ENCODE measurements at regions of chr17 and their contacts with region 1.

Region 1: DNA sequence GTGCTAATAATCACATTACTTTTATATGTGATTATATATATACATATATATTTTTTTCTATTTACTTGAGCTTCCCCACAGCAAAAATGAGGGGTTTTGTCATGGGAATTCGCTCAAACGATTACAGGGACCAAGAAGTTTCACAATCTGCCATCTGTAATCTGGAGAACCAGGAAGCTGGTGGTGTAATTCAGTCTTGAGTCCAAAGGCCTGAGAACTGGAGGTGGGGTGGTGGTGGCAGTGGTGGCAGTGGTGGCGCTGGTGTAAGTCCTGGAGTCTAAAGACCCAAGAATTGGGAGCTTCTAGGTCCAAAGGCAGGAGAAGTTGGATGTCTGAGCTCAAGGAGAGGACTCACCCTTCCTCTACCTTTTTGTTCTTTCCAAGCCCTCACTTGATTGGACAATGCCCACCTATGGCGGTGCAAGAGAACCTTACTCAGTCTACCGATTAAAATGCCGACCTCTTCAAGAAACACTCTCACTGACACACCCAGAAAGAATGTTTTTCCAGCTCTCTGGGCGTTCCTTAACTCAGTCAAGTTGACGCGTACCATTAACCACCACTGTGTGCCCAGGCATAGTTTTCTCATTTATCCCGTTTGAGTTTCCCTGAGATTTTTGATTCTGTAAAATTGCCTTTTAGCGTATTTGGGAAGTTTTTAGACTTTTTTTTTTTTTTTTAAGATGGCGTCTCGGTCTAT is 31.9 kb downstream of the POLR2A start:
- DNase-seq: no peak
- ATAC-seq: no peak
- H3K4me3 ChIP-seq: no peak overlapping the region
- H3K4me3 Mint-ChIP-seq: no peak overlapping the region
- H3K27ac ChIP-seq: no peak overlapping the region
- H3K27ac Mint-ChIP-seq: no peak overlapping the region
- H3K4me1 ChIP-seq: no peaks in the 10 kb centered on the region
- H3K4me1 Mint-ChIP-seq: peaks cover 2% of the 10 kb centered on the region
- H3K27me3 ChIP-seq: no peaks in the 10 kb centered on the region
- H3K27me3 Mint-ChIP-seq: no peaks in the 10 kb centered on the region
- CTCF ChIP-seq: no peak

Region 2: GRCh38 chr17:7454980-7455379 is 61.1 kb before region 1 on chr17:
- CTCF ChIA-PET with region 1: interaction called, 10 read pairs
- POLR2A ChIA-PET with region 1: no interaction called
- intact Hi-C with region 1: no loop called
- DNase-seq: no peak
- ATAC-seq: peak; percentile 35
- H3K4me3 ChIP-seq: peak overlapping the region; percentile 82 to 83
- H3K4me3 Mint-ChIP-seq: peak overlapping the region; percentile 98
- H3K27ac ChIP-seq: peak overlapping the region; percentile 60 to 74
- H3K27ac Mint-ChIP-seq: peak overlapping the region; percentile 91
- H3K4me1 ChIP-seq: peaks cover 15% of the 10 kb centered on the region
- H3K4me1 Mint-ChIP-seq: peaks cover 24% of the 10 kb centered on the region
- H3K27me3 ChIP-seq: no peaks in the 10 kb centered on the region
- H3K27me3 Mint-ChIP-seq: no peaks in the 10 kb centered on the region
- CTCF ChIP-seq: no peak

Region 3: GRCh38 chr17:7502987-7503386 is 13.1 kb before region 1 on chr17:
- CTCF ChIA-PET with region 1: interaction called, 11 read pairs
- POLR2A ChIA-PET with region 1: interaction called, 4 read pairs
- intact Hi-C with region 1: no loop called
- DNase-seq: peak in 2 of 9 experiments; percentile 34 to 47
- ATAC-seq: peak; percentile 41
- H3K4me3 ChIP-seq: no peak overlapping the region
- H3K4me3 Mint-ChIP-seq: no peak overlapping the region
- H3K27ac ChIP-seq: no peak overlapping the region
- H3K27ac Mint-ChIP-seq: no peak overlapping the region
- H3K4me1 ChIP-seq: no peaks in the 10 kb centered on the region
- H3K4me1 Mint-ChIP-seq: no peaks in the 10 kb centered on the region
- H3K27me3 ChIP-seq: no peaks in the 10 kb centered on the region
- H3K27me3 Mint-ChIP-seq: no peaks in the 10 kb centered on the region
- CTCF ChIP-seq: no peak

Region 4: DNA sequence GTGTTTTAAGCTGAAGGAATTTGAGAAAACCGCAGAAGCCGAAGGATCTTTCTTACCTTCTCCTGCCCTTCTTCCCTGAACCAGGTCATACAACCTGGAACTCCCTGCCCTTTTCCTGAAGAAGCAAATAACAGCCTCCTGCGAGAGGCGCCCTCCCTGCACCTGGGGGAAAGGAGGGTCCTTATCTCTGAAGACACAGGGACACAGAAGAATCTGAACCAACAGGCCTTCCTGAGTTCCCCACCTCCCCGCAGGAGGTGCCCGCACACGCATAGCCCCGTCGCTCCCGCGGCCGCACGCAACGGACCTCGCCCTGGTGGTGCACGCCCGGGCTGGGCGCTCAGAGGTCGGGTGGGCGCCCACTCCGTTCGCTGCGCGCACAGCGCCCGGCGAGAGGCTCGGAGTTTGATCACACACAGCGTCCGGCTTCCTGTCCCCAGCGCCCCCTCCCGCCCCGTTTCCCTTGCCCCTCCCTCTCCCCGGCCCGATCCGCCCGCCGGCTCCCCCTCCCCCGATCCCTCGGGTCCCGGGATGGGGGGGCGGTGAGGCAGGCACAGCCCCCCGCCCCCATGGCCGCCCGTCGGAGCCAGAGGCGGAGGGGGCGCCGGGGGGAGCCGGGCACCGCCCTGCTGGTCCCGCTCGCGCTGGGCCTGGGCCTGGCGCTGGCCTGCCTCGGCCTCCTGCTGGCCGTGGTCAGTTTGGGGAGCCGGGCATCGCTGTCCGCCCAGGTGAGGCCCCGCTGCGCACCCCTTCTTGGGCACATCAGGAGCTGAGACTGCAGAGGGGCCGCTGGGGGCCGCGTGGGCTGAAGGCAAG is 32.7 kb after region 1 on chr17 and contains the start of gene TNFSF12:
- CTCF ChIA-PET with region 1: interaction called, 343 read pairs
- POLR2A ChIA-PET with region 1: no interaction called
- intact Hi-C with region 1: loop called in 1 of 2 experiments (anchors 5 kb)
- DNase-seq: peak in 8 of 9 experiments; percentile 45 to 80 (median 64)
- ATAC-seq: peak; percentile 49
- H3K4me3 ChIP-seq: peak within 1 kb of the TSS; percentile 64 to 92
- H3K4me3 Mint-ChIP-seq: peak within 1 kb of the TSS; percentile 84
- H3K27ac ChIP-seq: peak within 1 kb of the TSS; percentile 78 to 83
- H3K27ac Mint-ChIP-seq: peak within 1 kb of the TSS; percentile 90
- H3K4me1 ChIP-seq: peaks cover 56% of the 10 kb centered on the region
- H3K4me1 Mint-ChIP-seq: peaks cover 45% of the 10 kb centered on the region
- H3K27me3 ChIP-seq: no peaks in the 10 kb centered on the region
- H3K27me3 Mint-ChIP-seq: no peaks in the 10 kb centered on the region
- CTCF ChIP-seq: no peak
- total RNA-seq, gene TNFSF12: 11.3 to 13.1 TPM

Region 5: GRCh38 chr17:7589204-7589868 is 73.3 kb after region 1 on chr17:
- CTCF ChIA-PET with region 1: interaction called, 31 read pairs
- POLR2A ChIA-PET with region 1: interaction called, 3 read pairs
- intact Hi-C with region 1: loop called (anchors 2 kb)
- DNase-seq: peak; percentile 40 to 81 (median 68)
- ATAC-seq: peak; percentile 89
- H3K4me3 ChIP-seq: no peak overlapping the region
- H3K4me3 Mint-ChIP-seq: no peak overlapping the region
- H3K27ac ChIP-seq: no peak overlapping the region
- H3K27ac Mint-ChIP-seq: peak overlapping the region; percentile 41
- H3K4me1 ChIP-seq: peaks cover 14% of the 10 kb centered on the region
- H3K4me1 Mint-ChIP-seq: peaks cover 12% of the 10 kb centered on the region
- H3K27me3 ChIP-seq: no peaks in the 10 kb centered on the region
- H3K27me3 Mint-ChIP-seq: no peaks in the 10 kb centered on the region
- CTCF ChIP-seq: peak; percentile 61